PC-3 (cell line): ENCODE measurements at regions of chr5 and their contacts with region 1.

Region 1: DNA sequence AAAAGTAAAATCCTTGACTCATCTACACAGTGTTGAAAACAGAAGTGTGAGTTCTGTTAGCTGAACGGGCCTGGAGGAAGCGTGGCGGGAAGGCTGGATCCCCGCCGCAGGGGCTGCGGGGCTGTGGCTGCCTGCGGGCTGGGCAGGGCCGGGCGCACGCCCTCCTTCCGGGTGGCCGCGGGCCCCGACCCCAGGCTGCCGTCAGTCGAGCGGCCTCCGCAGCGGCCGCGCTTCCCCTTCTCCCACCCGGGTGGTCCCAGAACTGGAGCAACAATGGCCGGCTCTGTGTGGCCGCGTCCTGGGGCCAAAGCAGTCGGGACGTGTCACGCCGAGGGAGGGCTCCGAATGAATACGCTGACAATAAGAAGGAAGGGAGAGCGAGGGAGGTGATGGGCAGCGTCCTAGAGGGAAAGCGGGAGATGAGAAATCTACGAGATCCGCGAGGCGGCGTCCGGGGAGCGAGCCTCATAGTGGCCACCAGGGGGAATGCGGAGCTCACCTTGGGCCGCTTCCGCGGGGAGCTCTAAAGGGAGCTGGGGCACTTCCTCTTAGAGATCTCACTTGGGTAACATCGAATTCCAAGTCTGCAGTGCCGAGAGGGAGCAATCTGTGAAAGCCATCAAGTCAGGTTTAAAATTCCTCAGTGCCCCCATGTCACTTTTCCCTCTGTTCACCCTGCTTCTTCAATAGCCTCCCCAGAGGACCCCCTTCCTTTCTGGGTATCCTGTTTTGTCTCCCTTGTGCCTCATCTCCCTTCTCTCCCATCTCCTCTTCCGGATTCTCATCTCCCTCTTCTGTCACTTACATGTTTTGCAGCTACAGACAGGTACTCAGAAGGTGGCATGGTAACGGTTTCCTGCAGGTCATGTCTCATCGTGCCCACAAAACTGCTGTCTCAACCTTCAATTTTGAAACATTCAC is 83.9 kb downstream of the SLC1A3 start:
- DNase-seq: peak; percentile 92
- ATAC-seq: peak; percentile 93
- H3K4me3 ChIP-seq: peak overlapping the region; percentile 84
- H3K27ac ChIP-seq: peak overlapping the region; percentile 41
- H3K4me1 ChIP-seq: peaks cover 8% of the 10 kb centered on the region; the same call in 1 of the 2 replicates
- H3K27me3 ChIP-seq: no peaks in the 10 kb centered on the region
- CTCF ChIP-seq: peak; percentile 76

Region 2: GRCh38 chr5:36507332-36507952 is 182.9 kb before region 1 on chr5:
- CTCF ChIA-PET with region 1: no interaction called
- POLR2A ChIA-PET with region 1: no interaction called
- intact Hi-C with region 1: loop called (anchors 1 kb)
- DNase-seq: peak; percentile 86
- ATAC-seq: peak; percentile 39
- H3K4me3 ChIP-seq: no peak overlapping the region
- H3K27ac ChIP-seq: no peak overlapping the region
- H3K4me1 ChIP-seq: peaks cover 18% of the 10 kb centered on the region
- H3K27me3 ChIP-seq: no peaks in the 10 kb centered on the region
- CTCF ChIP-seq: peak; percentile 93

Region 3: GRCh38 chr5:36657563-36657995 is 32.7 kb before region 1 on chr5:
- CTCF ChIA-PET with region 1: interaction called, 6 read pairs
- POLR2A ChIA-PET with region 1: no interaction called
- intact Hi-C with region 1: loop called (anchors 1 kb)
- DNase-seq: peak; percentile 99
- ATAC-seq: peak; percentile 96
- H3K4me3 ChIP-seq: peak overlapping the region; percentile 48; the same call in 1 of the 2 replicates
- H3K27ac ChIP-seq: peak overlapping the region; percentile 96
- H3K4me1 ChIP-seq: peaks cover 44% of the 10 kb centered on the region
- H3K27me3 ChIP-seq: no peaks in the 10 kb centered on the region
- CTCF ChIP-seq: no peak

Region 4: DNA sequence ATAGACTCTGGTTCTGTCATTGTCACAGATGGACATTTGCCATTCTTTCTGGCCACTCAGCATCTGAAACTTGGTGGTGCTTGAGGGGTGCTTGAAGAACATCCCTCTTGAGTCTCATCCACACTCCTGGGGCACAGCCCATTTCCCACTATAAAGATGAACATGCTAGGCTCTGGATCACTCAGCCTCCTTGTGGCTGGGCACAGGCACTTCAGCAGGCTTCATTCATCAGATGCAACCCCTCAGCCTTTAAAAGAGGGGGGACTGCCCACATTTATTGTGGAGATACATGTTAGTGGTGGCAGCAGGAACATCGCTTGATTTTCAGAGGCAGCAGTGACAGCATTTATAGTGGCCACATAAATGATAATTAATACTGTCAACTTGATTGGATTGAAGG is 61.6 kb after region 1 on chr5:
- CTCF ChIA-PET with region 1: no interaction called
- POLR2A ChIA-PET with region 1: no interaction called
- intact Hi-C with region 1: no loop called
- DNase-seq: peak; percentile 28
- ATAC-seq: peak; percentile 51; the same call in 1 of the 2 replicates
- H3K4me3 ChIP-seq: no peak overlapping the region
- H3K27ac ChIP-seq: no peak overlapping the region
- H3K4me1 ChIP-seq: no peaks in the 10 kb centered on the region
- H3K27me3 ChIP-seq: peaks cover 51% of the 10 kb centered on the region
- CTCF ChIP-seq: 0 out of 2 replicates have a peak, but pooled peaks have one; percentile 33